ENCODE measurements at regions of chr14 and their contacts with region 1.

Region 1: DNA sequence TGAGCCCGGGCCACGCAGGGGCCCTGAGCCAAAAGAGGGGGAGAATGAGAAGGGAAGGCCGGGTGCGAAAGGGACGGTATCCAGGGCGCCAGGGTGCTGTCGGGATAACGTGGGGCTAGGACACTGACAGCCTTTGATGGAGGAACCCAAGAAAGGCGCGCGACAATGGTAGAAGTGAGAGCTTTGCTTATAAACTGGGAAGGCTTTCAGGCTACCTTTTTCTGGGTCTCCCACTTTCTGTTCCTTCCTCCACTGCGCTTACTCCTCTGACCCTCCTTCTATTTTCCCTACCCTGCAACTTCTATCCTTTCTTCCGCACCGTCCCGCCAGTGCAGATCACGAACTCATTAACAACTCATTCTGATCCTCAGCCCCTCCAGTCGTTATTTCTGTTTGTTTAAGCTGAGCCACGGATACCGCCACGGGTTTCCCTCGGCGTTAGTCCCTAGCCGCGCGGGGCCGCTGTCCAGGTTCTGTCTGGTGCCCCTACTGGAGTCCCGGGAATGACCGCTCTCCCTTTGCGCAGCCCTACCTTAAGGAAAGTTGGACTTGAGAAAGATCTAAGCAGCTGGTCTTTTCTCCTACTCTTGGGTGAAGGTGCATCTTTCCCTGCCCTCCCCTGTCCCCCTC is 3.0 kb downstream of the SSTR1 start:
- DNase-seq: no peak
- ATAC-seq: no peak
- H3K4me3 ChIP-seq: no peak overlapping the region
- H3K4me3 Mint-ChIP-seq: peak overlapping the region; percentile 23
- H3K27ac ChIP-seq: no peak overlapping the region
- H3K27ac Mint-ChIP-seq: no peak overlapping the region
- H3K4me1 ChIP-seq: peaks cover 23% of the 10 kb centered on the region
- H3K4me1 Mint-ChIP-seq: peaks cover 29% of the 10 kb centered on the region
- H3K27me3 ChIP-seq: peaks cover 5 to 13% of the 10 kb centered on the region in 2 experiments
- H3K27me3 Mint-ChIP-seq: peaks cover 57% of the 10 kb centered on the region
- CTCF ChIP-seq: no peak

Region 2: GRCh38 chr14:38186216-38186615 is 24.5 kb before region 1 on chr14:
- CTCF ChIA-PET with region 1: no interaction called
- POLR2A ChIA-PET with region 1: no interaction called
- intact Hi-C with region 1: loop called in 1 of 2 experiments (anchors 2 kb)
- DNase-seq: no peak
- ATAC-seq: no peak
- H3K4me3 ChIP-seq: no peak overlapping the region
- H3K4me3 Mint-ChIP-seq: no peak overlapping the region
- H3K27ac ChIP-seq: no peak overlapping the region
- H3K27ac Mint-ChIP-seq: no peak overlapping the region
- H3K4me1 ChIP-seq: peaks cover 4% of the 10 kb centered on the region
- H3K4me1 Mint-ChIP-seq: peaks cover 5% of the 10 kb centered on the region
- H3K27me3 ChIP-seq: no peaks in the 10 kb centered on the region
- H3K27me3 Mint-ChIP-seq: no peaks in the 10 kb centered on the region
- CTCF ChIP-seq: no peak

Region 3: GRCh38 chr14:38420048-38420447 is 209.3 kb after region 1 on chr14:
- CTCF ChIA-PET with region 1: no interaction called
- POLR2A ChIA-PET with region 1: no interaction called
- intact Hi-C with region 1: no loop called
- DNase-seq: no peak
- ATAC-seq: no peak
- H3K4me3 ChIP-seq: no peak overlapping the region
- H3K4me3 Mint-ChIP-seq: no peak overlapping the region
- H3K27ac ChIP-seq: no peak overlapping the region
- H3K27ac Mint-ChIP-seq: no peak overlapping the region
- H3K4me1 ChIP-seq: no peaks in the 10 kb centered on the region
- H3K4me1 Mint-ChIP-seq: no peaks in the 10 kb centered on the region
- H3K27me3 ChIP-seq: no peaks in the 10 kb centered on the region
- H3K27me3 Mint-ChIP-seq: no peaks in the 10 kb centered on the region
- CTCF ChIP-seq: no peak

Measured in CD8-positive, alpha-beta T cell (primary cell).